Caco-2 (cell line): ENCODE measurements at regions of chrX and their contacts with region 1.

Region 1: GRCh38 chrX:50680990-50681389 is 133.0 kb downstream of the SHROOM4 start:
- DNase-seq: no peak
- H3K4me3 ChIP-seq: no peak overlapping the region
- H3K4me3 Mint-ChIP-seq: no peak overlapping the region
- H3K27ac Mint-ChIP-seq: no peak overlapping the region
- H3K4me1 ChIP-seq: no peaks in the 10 kb centered on the region
- H3K4me1 Mint-ChIP-seq: no peaks in the 10 kb centered on the region
- H3K27me3 ChIP-seq: no peaks in the 10 kb centered on the region
- H3K27me3 Mint-ChIP-seq: peaks cover under 1% of the 10 kb centered on the region
- CTCF ChIP-seq: peak in 1 of 2 experiments; percentile 32

Region 2: DNA sequence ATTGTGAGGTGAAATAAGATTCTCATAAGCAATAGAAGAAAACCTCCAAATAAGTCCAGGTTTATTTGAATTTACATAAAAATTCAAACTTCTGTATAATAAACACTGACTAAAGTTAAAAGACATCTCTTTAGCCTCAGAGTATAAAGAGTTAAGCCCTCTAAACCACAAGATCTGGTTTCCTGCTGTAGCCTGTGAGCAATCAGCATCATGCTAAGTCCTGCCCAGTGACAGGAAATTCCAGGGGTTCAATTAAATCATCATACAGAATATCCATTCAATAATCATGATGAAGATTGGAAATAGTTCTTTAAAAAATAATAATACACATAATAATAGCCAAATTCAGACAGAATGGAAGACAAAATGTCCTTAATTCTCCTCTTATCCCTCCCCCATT is 71.2 kb before region 1 on chrX:
- CTCF ChIA-PET with region 1: no interaction called
- POLR2A ChIA-PET with region 1: no interaction called
- intact Hi-C with region 1: loop called (anchors 5 kb)
- DNase-seq: no peak
- H3K4me3 ChIP-seq: no peak overlapping the region
- H3K4me3 Mint-ChIP-seq: no peak overlapping the region
- H3K27ac Mint-ChIP-seq: no peak overlapping the region
- H3K4me1 ChIP-seq: no peaks in the 10 kb centered on the region
- H3K4me1 Mint-ChIP-seq: peaks cover 8% of the 10 kb centered on the region
- H3K27me3 ChIP-seq: no peaks in the 10 kb centered on the region
- H3K27me3 Mint-ChIP-seq: no peaks in the 10 kb centered on the region
- CTCF ChIP-seq: no peak